RWPE1 (cell line): ENCODE measurements at regions of chr22 and their contacts with region 1.

Region 1: GRCh38 chr22:46367707-46368191 is 32.2 kb downstream of the TRMU start:
- DNase-seq: peak; percentile 68
- H3K27ac ChIP-seq: peak overlapping the region; percentile 18
- CTCF ChIP-seq: peak; percentile 92

Region 2: DNA sequence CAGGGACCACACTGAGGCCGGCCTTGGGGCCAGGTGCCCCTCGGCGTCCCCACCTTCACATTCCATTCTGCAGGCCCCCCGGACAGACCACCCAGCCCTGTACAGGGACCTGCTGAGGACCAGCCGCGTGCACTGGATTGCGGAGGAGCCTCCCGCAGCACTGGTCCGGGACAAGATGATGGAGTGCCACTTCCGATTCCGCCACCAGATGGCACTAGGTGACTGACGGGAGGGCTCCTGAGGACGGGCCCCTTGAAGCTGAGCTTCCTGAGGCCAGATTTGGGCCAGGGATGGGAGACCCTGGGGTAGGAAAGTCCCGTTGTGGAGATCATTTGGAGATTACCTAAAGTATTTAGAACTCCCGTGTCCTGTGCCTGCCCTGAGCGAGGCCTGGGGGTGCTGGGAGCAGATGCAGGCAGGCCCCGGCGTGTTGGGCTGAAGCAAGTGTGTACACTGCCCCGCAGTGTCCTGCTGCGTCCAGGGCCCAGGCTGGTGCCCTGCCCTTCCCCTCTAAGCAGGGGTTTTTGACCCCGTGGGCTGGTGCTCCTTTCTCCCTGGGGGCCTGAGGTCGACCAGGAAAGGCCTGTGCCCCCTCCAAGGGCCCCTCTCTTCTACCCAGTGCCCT is 12.3 kb before region 1 on chr22:
- CTCF ChIA-PET with region 1: interaction called, 10 read pairs
- POLR2A ChIA-PET with region 1: no interaction called
- DNase-seq: peak; percentile 56
- H3K27ac ChIP-seq: peak overlapping the region; percentile 81
- CTCF ChIP-seq: peak; percentile 87

Region 3: DNA sequence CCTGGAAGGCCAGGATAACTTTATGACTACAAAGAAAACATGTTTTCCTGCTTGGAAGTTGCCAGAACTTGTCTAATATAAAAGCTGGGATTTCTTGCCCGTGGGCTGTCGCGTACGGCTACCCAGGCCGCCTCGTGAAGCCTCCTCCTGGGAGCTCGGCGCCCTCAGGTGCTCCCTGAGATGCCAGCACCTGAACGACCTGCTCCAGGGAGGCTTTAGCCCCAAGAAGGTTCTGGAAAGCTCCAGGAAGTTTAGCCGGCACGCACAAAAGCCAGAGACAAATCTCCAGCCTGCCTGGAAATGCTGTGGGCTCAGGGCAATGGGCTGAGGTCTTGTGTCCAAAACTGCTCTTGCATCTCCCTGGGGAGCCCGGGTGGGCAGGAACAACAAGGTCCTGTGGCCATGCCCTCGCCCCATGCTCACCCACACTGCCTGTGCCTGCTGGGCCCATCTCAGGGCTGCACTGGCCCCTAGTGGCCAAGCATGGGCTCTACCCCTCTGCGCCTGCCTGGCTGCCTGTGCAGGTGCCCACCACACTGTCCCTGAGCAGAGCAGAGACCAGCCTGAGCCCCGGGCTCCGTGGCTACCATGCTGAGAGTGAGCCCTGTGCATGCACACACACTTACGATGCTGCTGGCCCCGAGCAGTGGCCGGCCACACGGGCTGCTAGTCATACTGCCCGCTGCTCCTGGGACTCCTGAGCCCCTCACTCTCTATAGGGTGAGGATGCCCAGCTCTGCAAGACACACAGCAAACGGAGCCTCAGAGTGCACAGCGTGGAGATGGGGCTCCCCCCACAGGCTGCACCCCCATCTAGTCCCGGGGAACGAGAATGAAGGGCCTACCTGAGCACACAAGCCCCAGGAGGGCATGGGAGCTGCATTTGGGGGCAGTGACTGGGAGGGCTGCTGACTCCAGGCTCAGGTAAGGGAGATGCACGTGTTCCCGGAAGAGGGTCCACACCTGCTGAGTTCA is 174.5 kb after region 1 on chr22:
- CTCF ChIA-PET with region 1: interaction called, 17 read pairs
- POLR2A ChIA-PET with region 1: no interaction called
- DNase-seq: peak; percentile 64
- H3K27ac ChIP-seq: peak overlapping the region; percentile 95
- CTCF ChIP-seq: peak; percentile 96